Panc1 (cell line): ENCODE measurements at regions of chr12 and their contacts with region 1.

Region 1: DNA sequence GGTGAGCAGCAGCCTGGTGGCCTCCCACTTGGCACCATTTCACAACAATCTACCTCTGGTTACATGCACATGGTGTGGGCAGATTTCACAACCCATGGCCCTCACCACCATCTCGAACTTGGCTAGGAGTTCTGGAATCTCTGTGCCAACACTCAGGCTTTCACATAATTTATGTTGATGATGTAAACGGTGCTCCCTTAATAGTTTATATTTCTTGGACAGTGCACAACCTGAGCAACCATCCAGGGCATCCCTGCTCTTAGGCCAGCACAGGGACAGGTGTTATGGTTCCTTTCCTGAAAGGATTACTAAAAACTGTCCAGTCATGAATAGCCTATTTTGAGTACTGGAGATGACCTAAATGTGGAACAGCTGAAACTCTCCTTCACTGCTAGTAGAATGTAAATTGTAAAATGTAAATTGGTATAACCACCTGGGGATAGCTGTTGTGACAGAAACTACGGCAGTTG is 28.6 kb downstream of the ABCB9 start:
- DNase-seq: no peak
- ATAC-seq: no peak
- H3K4me3 ChIP-seq: no peak overlapping the region
- H3K27ac ChIP-seq: no peak overlapping the region
- H3K4me1 ChIP-seq: peaks cover 3% of the 10 kb centered on the region; the same call in 1 of the 2 replicates
- H3K27me3 ChIP-seq: no peaks in the 10 kb centered on the region
- CTCF ChIP-seq: no peak

Region 2: DNA sequence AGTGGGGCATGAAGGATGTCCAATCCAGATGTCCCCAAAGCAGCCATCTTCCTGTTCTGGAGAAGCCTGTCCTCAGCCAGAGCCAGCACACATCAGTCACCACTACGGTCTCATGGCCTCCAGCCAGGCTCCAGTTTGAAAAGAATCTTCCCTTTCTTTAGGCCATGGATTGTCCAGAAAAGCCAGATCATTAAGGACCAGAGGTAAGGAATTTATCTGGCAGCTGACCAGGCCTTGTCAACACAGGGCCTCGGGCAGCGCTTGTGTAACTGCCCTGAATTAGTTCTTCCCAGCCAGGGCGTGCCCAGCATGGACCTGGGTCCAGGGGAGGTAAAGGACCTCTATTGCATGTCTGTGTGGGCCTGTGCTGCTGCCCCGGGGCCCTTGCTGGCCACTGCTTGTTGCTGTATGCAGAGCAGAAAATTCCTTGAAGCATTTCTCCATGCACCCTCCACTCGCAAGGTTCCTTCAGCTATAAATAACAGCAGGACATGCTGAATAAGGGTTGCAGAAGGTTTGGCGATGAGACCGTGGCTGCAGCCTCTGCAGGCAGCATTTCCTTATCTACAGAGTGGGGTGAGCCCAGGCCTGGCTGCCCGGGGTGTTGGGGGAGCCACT is 20.0 kb before region 1 on chr12:
- CTCF ChIA-PET with region 1: no interaction called
- POLR2A ChIA-PET with region 1: interaction called, 11 read pairs
- in situ Hi-C with region 1: no loop called
- intact Hi-C with region 1: no loop called
- DNase-seq: no peak
- ATAC-seq: peak; percentile 72
- H3K4me3 ChIP-seq: no peak overlapping the region
- H3K27ac ChIP-seq: peak overlapping the region; percentile 77
- H3K4me1 ChIP-seq: peaks cover 35% of the 10 kb centered on the region
- H3K27me3 ChIP-seq: no peaks in the 10 kb centered on the region
- CTCF ChIP-seq: no peak

Region 3: GRCh38 chr12:122951979-122952892 is 14.6 kb after region 1 on chr12:
- CTCF ChIA-PET with region 1: no interaction called
- POLR2A ChIA-PET with region 1: no interaction called
- in situ Hi-C with region 1: no loop called
- intact Hi-C with region 1: no loop called
- DNase-seq: no peak
- ATAC-seq: peak; percentile 97
- H3K4me3 ChIP-seq: no peak overlapping the region
- H3K27ac ChIP-seq: peak overlapping the region; percentile 82
- H3K4me1 ChIP-seq: peaks cover 27% of the 10 kb centered on the region
- H3K27me3 ChIP-seq: no peaks in the 10 kb centered on the region
- CTCF ChIP-seq: peak; percentile 95